Brain microvascular endothelial cell (primary cell): ENCODE measurements at regions of chr4 and their contacts with region 1.

Region 1: DNA sequence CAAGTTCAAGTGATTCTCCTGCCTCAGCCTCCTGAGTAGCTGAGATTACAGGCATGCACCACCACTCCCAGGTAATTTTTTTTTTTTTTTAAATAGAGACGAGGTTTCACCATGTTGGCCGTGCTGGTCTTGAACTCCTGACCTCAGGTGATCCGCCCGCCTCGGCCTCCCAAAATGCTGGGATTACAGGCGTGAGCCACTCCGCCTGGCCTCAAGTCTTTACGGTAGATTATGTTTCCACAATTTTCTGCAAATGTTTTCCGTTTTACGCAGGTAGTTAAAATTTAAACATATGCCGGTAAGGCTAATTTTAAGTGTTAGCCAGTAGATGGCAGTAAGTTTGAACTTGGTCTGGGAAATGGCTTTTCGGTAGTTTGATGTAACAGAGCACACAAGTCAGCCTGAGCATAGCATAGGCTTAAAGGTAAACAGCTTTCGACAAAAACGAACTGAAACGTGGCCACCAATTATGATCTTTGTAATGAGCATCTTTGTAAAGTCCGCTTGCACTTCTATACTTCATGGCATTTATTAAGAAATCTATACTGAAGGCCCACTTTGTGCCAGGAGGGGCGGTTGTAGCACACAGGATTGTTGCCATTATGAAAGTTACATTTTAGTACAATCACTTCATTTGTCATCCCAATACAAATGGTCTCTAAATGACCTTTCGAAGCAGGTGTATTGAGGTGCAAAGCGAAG is 31.1 kb downstream of the CCKAR start:
- DNase-seq: no peak
- H3K4me3 ChIP-seq: no peak overlapping the region
- H3K27ac ChIP-seq: no peak overlapping the region
- H3K27me3 ChIP-seq: no peaks in the 10 kb centered on the region
- CTCF ChIP-seq: peak; percentile 64

Region 2: DNA sequence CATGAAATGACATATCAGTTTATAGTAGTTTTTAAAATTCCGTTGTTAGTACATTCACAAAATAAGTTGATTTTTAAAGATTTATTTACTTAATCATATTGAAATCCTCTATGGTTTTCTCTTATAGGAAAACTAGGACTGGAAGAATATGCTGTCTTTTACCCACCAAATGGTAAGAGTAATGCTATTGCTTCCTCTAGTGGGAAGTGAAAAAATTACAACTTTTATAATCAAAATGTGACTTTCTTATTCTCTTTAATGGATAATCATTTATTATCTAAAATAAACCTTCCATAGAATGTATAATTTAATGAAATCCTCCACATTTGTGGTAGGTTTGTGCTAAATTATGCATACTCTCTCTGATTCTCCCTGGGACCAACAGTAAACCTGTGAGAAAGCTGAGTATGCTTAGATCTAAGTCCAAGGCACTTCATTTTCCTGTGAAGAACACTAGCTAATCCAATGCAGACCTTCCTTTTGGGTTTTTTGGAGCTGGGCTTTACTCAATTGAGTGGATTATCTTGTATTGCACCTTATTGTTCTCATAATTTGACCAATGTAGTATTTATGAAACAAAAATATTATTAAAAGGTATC is 260.8 kb after region 1 on chr4:
- in situ Hi-C with region 1: loop called (anchors 25 kb)
- DNase-seq: no peak
- H3K4me3 ChIP-seq: no peak overlapping the region
- H3K27ac ChIP-seq: no peak overlapping the region
- H3K27me3 ChIP-seq: no peaks in the 10 kb centered on the region
- CTCF ChIP-seq: peak; percentile 45

Region 3: DNA sequence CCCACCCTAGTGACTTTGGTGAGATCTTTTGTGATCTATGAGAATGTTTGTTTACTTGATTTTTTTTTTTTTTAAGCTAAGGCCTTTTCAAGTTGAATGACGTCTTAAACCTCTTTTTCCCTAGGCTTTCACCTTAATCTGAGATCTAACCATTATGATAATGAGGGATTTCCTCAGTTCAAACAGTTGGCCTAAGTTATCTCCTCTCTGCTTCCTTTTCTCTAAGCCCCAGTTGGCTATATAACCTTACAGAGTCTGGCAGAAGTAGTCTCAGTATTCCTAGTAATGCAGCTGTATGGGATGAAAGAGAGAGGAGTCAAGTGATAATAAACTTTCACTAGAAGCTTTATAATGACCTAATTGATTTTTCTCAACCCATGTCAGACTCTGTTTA is 500.4 kb after region 1 on chr4:
- in situ Hi-C with region 1: no loop called
- DNase-seq: no peak
- H3K4me3 ChIP-seq: no peak overlapping the region
- H3K27ac ChIP-seq: no peak overlapping the region
- H3K27me3 ChIP-seq: no peaks in the 10 kb centered on the region
- CTCF ChIP-seq: no peak